Panc1 (cell line): ENCODE measurements at regions of chr12 and their contacts with region 1.

Region 1: GRCh38 chr12:56041552-56042429 is at the start of gene RPS26:
- DNase-seq: peak; percentile 99
- ATAC-seq: peak; percentile 97
- H3K4me3 ChIP-seq: peak within 1 kb of the TSS; percentile 92 to 96
- H3K27ac ChIP-seq: peak within 1 kb of the TSS; percentile 100
- H3K4me1 ChIP-seq: 0 out of 2 replicates have a peak, but pooled peaks cover 6% of the 10 kb centered on the region
- H3K27me3 ChIP-seq: no peaks in the 10 kb centered on the region
- CTCF ChIP-seq: peak; percentile 89
- total RNA-seq, gene RPS26: 46.4 TPM

Region 2: GRCh38 chr12:55745361-55746146 is 296.2 kb before region 1 on chr12:
- CTCF ChIA-PET with region 1: interaction called, 7 read pairs
- POLR2A ChIA-PET with region 1: interaction called, 10 read pairs
- in situ Hi-C with region 1: no loop called
- intact Hi-C with region 1: no loop called
- DNase-seq: no peak
- ATAC-seq: no peak
- H3K4me3 ChIP-seq: no peak overlapping the region
- H3K27ac ChIP-seq: no peak overlapping the region
- H3K4me1 ChIP-seq: peaks cover 24% of the 10 kb centered on the region
- H3K27me3 ChIP-seq: no peaks in the 10 kb centered on the region
- CTCF ChIP-seq: no peak

Region 3: DNA sequence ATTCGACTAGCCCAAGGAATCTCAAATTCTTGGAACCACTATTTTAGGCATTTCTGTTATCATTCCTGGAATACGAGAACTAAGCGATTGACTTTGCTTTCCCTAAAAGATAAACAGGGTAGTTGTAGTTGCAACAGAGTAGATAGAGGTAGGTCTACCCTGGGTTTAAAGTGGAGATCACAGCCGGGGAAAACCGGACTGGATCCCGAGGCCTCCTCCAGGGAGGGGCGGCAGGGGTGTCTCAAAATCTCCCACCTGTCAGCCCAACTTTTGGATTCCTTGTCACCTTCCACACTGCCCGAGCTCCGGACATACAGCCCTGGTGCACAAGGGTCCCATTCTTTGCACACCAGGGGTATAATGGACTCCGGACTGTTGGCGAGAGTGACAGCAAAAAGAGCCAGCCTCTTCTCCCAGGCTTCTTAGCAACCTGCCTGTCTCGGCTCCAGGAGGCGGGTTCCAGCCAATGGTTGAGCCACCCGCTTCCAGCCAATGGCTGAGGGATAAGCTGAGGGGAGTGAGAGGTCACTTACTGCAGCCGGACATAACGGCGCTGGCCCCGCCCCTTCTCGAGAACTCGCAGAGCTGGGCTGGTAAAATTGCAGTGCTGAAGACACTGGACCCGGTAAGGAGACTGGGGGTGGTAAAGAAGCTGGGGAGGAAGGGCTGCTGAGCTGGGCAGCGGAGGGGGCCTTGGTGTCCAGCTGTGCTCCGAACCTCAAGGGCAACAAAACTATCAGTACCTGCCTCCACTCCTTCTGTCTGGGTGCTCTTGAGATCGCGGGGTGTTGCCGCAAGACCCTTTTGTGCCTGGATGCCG is 44.9 kb before region 1 on chr12 and contains the start of gene SUOX:
- CTCF ChIA-PET with region 1: interaction called, 5 read pairs
- POLR2A ChIA-PET with region 1: interaction called, 4 read pairs
- in situ Hi-C with region 1: no loop called
- intact Hi-C with region 1: loop called (anchors 5 kb)
- DNase-seq: peak; percentile 87
- ATAC-seq: peak; percentile 100
- H3K4me3 ChIP-seq: peak within 1 kb of the TSS; percentile 88 to 98
- H3K27ac ChIP-seq: peak within 1 kb of the TSS; percentile 90
- H3K4me1 ChIP-seq: no peaks in the 10 kb centered on the region
- H3K27me3 ChIP-seq: no peaks in the 10 kb centered on the region
- CTCF ChIP-seq: no peak
- total RNA-seq, gene SUOX: 20.7 TPM

Region 4: GRCh38 chr12:56078990-56079664 is 37.3 kb after region 1 on chr12:
- CTCF ChIA-PET with region 1: no interaction called
- POLR2A ChIA-PET with region 1: no interaction called
- in situ Hi-C with region 1: no loop called
- intact Hi-C with region 1: no loop called
- DNase-seq: peak; percentile 83
- ATAC-seq: peak; percentile 95
- H3K4me3 ChIP-seq: peak overlapping the region; percentile 58 to 84
- H3K27ac ChIP-seq: peak overlapping the region; percentile 82
- H3K4me1 ChIP-seq: peaks cover 6% of the 10 kb centered on the region
- H3K27me3 ChIP-seq: no peaks in the 10 kb centered on the region
- CTCF ChIP-seq: peak; percentile 96

Region 5: DNA sequence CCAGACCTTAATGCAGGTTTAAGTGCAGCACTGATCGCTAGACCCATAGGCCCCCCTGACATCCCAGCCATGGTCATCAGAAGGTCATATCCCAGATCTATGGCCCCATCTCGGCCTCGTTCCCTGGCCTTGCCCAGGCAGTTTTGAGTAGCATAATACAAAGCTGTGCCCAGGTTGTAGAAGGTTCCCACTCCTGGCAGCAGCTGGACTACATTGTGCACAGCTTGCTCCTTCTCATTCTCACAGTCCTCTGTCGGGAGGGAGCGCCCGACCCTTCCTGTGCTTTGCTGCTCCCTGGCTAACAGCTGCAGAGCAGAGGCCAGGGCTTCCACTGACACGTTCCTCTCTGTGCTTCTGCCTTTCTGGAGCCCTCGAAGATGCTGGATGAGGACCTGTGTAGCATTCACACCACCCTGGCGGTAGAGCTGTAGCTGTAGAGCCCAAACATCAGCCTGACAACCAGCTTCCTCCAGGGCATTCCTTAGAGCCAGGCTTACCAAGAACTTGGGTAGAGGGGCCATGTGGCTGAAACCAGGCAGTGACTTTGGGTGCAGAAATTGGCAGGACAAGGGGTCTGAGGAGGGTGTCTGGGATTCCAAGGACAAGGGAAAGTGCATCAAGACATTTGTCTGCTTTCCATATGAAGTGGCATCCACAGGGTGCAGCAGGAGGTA is 319.8 kb after region 1 on chr12:
- CTCF ChIA-PET with region 1: no interaction called
- POLR2A ChIA-PET with region 1: no interaction called
- in situ Hi-C with region 1: no loop called
- intact Hi-C with region 1: no loop called
- DNase-seq: no peak
- ATAC-seq: no peak
- H3K4me3 ChIP-seq: peak overlapping the region in 1 of 2 experiments; percentile 87; a peak in 1 of 4 replicates
- H3K27ac ChIP-seq: no peak overlapping the region; the same call in 1 of the 2 replicates
- H3K4me1 ChIP-seq: peaks cover 8% of the 10 kb centered on the region
- H3K27me3 ChIP-seq: no peaks in the 10 kb centered on the region
- CTCF ChIP-seq: no peak